ENCODE measurements at regions of chr11 and their contacts with region 1.

Region 1: DNA sequence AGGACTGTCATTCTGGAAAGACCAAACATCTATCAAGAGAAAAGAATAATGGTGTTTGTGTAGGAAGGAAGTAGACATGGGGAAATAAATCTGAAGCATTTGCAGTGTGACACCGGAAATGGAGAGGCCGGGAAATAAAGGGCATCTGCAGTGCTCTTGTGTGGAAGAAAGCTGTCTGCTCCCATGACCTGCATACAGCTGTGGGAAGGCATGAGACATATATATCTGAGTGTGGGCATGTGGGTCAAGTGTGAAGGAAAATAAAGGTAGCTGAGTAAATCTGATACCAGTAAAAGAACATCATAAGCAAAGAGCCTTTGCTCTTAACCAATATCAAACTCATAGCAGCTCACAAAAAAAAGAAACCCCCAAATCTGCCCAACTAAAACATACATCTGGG is 72.1 kb upstream of the OR5AK2 start:
- DNase-seq: no peak
- H3K4me3 Mint-ChIP-seq: no peak overlapping the region
- H3K27ac Mint-ChIP-seq: no peak overlapping the region
- H3K4me1 Mint-ChIP-seq: peaks cover 7% of the 10 kb centered on the region
- H3K27me3 Mint-ChIP-seq: no peaks in the 10 kb centered on the region

Region 2: GRCh38 chr11:56932572-56933220 is 16.1 kb after region 1 on chr11:
- intact Hi-C with region 1: loop called (anchors 1 kb)
- DNase-seq: no peak
- H3K4me3 Mint-ChIP-seq: no peak overlapping the region
- H3K27ac Mint-ChIP-seq: no peak overlapping the region
- H3K4me1 Mint-ChIP-seq: no peaks in the 10 kb centered on the region
- H3K27me3 Mint-ChIP-seq: no peaks in the 10 kb centered on the region

Measured in activated T-helper 1 cell treated with anti-CD3 and anti-CD28 coated beads, Interleukin-12 subunit alpha, Interleukin-12 subunit beta, Interleukin-2, Interleukin-4 antibody, amounts not matched to agents 30 ng/mL and 10 ng/mL and 1 ng/mL, durations not matched to agents 14 hours and 24 hours and 36 hours (primary cell).